Right cardiac atrium (tissue), 5 donors: ENCODE measurements at regions of chr6 and their contacts with region 1.

Region 1: DNA sequence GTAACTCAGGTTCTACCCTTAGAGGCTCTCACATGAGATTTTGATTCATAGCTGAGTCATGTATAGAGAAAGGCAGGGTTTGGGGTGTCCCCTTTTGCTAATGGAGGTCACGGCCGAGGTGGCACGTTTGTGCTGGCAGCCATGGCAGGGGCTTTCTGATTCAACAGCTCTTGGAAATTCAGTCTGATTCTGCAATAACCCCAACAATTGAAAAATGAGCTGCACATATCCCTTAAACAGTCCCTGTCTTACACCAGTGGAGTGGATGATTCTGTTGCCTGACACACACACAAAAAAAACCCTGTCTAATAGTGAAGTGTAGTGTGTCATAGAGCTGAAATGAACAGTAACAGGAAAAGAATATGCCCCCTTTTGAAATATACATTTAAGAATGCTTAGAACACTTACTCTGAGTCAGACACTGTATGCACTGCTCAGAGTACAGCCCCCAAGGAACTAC is 40.4 kb upstream of the ARG1 start:
- DNase-seq: no peak
- ATAC-seq: no peak
- H3K4me3 ChIP-seq: no peak overlapping the region
- H3K27ac ChIP-seq: no peak overlapping the region
- H3K4me1 ChIP-seq: no peaks in the 10 kb centered on the region
- H3K27me3 ChIP-seq: no peaks in the 10 kb centered on the region

Region 2: GRCh38 chr6:131199568-131200272 is 332.9 kb before region 1 on chr6:
- intact Hi-C with region 1: loop called in 3 of 4 experiments (anchors 5 to 10 kb)
- DNase-seq: peak in 1 of 3 donors; percentile 50
- ATAC-seq: peak; percentile 75 to 82
- H3K4me3 ChIP-seq: no peak overlapping the region
- H3K27ac ChIP-seq: no peak overlapping the region
- H3K4me1 ChIP-seq: no peaks in the 10 kb centered on the region
- H3K27me3 ChIP-seq: no peaks in the 10 kb centered on the region